SK-N-SH (cell line): ENCODE measurements at regions of chr10 and their contacts with region 1.

Region 1: DNA sequence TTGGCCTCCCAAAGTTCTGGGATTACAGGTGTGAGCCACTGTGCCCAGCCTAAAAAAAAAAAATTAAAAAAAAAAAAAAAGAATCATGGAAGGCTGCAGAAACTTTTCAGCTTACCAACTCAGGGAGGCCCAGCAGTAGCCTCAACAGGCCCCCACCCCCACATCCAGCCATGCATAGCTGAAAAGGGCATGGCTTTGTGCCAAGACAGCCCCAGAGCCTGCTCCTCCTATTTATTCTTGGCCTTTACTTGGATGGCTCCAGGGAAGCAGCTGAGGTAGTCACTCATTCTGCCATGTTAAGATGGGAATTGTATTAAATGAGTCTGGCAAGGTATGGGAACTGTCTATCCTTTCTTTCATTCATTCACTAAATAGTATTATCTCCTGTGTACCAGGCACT is 13.7 kb upstream of the CNNM2 start:
- DNase-seq: no peak
- H3K4me3 ChIP-seq: no peak overlapping the region
- H3K27ac ChIP-seq: no peak overlapping the region
- H3K4me1 ChIP-seq: no peaks in the 10 kb centered on the region
- H3K27me3 ChIP-seq: no peaks in the 10 kb centered on the region
- CTCF ChIP-seq: no peak
- EP300 ChIP-seq: no peak
- RAD21 ChIP-seq: no peak

Region 2: GRCh38 chr10:102759497-102760210 is 144.7 kb before region 1 on chr10:
- CTCF ChIA-PET with region 1: no interaction called
- POLR2A ChIA-PET with region 1: no interaction called
- DNase-seq: no peak
- H3K4me3 ChIP-seq: no peak overlapping the region
- H3K27ac ChIP-seq: no peak overlapping the region
- H3K4me1 ChIP-seq: peaks cover 4 to 8% of the 10 kb centered on the region in 2 experiments; a peak in 2 of 4 replicates
- H3K27me3 ChIP-seq: no peaks in the 10 kb centered on the region
- CTCF ChIP-seq: no peak
- EP300 ChIP-seq: no peak
- RAD21 ChIP-seq: no peak

Region 3: DNA sequence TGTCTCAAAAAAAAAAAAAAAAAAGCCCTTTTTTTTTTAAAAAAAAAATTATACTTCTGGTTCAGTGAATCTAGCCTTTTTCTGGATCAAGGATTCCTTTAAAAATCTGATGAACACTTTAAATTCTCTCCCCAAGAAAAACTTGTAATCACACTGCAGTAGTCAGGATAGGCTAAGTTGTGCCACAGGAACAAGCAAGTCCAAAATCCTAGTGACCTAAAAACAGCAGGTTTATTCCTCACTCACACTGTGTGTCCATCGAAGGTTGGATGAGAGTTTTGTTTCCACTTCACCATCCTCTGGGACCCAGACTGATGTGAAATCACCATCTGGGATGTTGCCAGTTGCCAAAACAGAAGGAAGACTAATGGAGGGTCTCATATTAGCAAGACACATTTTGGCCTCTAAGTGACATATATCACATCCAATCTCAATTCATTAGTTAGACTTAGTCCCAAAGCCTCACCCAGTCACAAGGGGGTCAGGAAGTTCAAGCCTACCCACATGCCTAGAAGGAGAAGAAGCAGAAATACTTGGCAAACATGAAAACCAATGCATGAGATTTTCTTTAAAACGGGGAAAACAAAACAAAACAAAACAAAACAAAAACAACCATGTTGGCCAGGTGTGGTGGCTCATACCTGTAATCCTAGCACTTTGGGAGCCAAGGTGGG is 99.8 kb before region 1 on chr10:
- CTCF ChIA-PET with region 1: no interaction called
- POLR2A ChIA-PET with region 1: no interaction called
- DNase-seq: no peak
- H3K4me3 ChIP-seq: no peak overlapping the region
- H3K27ac ChIP-seq: no peak overlapping the region
- H3K4me1 ChIP-seq: peaks cover 5 to 18% of the 10 kb centered on the region in 2 experiments; a peak in 3 of 4 replicates
- H3K27me3 ChIP-seq: no peaks in the 10 kb centered on the region
- CTCF ChIP-seq: no peak
- EP300 ChIP-seq: no peak
- RAD21 ChIP-seq: no peak

Region 4: DNA sequence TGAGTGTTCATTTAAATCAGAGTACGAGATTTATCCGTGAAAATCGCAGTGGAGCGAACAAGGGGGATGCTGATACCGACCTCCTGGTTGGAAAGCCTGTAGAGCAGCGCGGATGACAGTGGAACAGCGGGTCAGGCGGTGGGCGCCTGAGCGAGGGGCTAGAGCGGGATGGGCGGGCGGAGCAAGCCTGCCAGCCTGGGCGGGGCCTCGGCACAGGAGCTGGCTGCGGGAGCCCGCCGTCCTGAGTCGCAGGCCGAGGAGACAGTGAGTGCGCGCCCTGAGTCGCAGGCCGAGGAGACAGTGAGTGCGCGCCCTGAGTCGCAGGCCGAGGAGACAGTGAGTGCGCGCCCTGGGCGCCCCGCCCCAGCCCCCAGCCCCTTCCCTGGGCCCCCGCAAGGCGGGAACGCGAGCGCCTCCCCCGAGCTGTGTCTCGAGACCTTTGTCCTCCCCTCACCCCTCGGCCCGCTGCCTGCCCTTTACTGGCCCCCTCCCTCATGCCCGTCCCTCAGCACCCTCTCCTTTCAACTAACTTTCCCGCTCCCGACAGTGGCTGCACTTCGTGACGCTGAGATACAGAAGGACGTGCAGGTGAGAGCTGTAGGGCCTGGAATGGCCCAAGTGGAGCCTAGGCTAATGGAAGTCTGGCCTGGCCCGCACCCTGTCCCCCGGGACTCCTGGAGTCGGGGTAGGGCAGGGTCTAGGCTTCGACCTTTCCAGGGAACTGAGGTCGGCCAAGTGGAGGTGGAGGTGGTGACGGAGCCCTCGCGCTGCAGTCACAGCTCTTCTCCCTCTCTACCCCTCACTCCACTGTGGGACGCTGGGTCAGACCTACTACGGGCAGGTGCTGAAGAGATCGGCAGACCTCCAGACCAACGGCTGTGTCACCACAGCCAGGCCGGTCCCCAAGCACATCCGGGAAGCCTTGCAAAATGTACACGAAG is 34.8 kb before region 1 on chr10 and contains the start of gene AS3MT:
- CTCF ChIA-PET with region 1: interaction called, 14 read pairs
- POLR2A ChIA-PET with region 1: interaction called, 3 read pairs
- DNase-seq: peak; percentile 92
- H3K4me3 ChIP-seq: peak within 1 kb of the TSS; percentile 53 to 66
- H3K27ac ChIP-seq: peak within 1 kb of the TSS in 1 of 2 experiments; percentile 29; a peak in 1 of 4 replicates
- H3K4me1 ChIP-seq: peaks cover 0 to 6% of the 10 kb centered on the region in 2 experiments; a peak in 1 of 4 replicates
- H3K27me3 ChIP-seq: no peaks in the 10 kb centered on the region
- CTCF ChIP-seq: no peak
- EP300 ChIP-seq: no peak
- RAD21 ChIP-seq: no peak
- polyA plus RNA-seq, gene AS3MT: 9.0 and 9.7 TPM in 2 replicates

Region 5: GRCh38 chr10:102945449-102946361 is 41.4 kb after region 1 on chr10:
- CTCF ChIA-PET with region 1: no interaction called
- POLR2A ChIA-PET with region 1: no interaction called
- DNase-seq: no peak
- H3K4me3 ChIP-seq: no peak overlapping the region
- H3K27ac ChIP-seq: no peak overlapping the region
- H3K4me1 ChIP-seq: peaks cover 0 to 6% of the 10 kb centered on the region in 2 experiments; a peak in 2 of 4 replicates
- H3K27me3 ChIP-seq: no peaks in the 10 kb centered on the region
- CTCF ChIP-seq: no peak
- EP300 ChIP-seq: no peak
- RAD21 ChIP-seq: no peak

Region 6: DNA sequence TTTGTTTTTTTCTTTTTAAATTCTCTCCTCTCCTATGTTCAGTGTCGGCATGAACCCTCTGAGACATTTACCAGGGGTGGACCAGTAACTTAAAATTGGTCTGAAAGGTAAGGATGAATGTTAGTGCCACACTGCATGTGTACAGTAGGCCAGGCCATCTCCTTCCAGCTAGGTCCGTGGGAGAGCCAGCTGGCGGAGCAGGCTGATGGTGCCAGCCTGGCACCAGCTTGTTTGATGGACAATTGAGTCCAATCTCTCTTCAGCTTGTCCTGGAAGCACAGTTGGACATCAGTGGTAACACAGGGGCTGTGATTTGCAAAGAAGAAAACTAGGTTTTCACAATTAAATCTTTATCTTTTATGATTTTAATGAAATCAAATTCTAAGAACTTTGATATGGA is 150.3 kb after region 1 on chr10:
- CTCF ChIA-PET with region 1: no interaction called
- POLR2A ChIA-PET with region 1: no interaction called
- DNase-seq: no peak
- H3K4me3 ChIP-seq: peak overlapping the region; percentile 43 to 48; a peak in 3 of 4 replicates
- H3K27ac ChIP-seq: peak overlapping the region; percentile 35 to 90; a peak in 3 of 4 replicates
- H3K4me1 ChIP-seq: peaks cover 0 to 14% of the 10 kb centered on the region in 2 experiments; a peak in 2 of 4 replicates
- H3K27me3 ChIP-seq: no peaks in the 10 kb centered on the region
- CTCF ChIP-seq: no peak
- EP300 ChIP-seq: no peak
- RAD21 ChIP-seq: no peak